Left ventricle myocardium inferior (tissue), 1 donor: ENCODE measurements at regions of chr14 and their contacts with region 1.

Region 1: DNA sequence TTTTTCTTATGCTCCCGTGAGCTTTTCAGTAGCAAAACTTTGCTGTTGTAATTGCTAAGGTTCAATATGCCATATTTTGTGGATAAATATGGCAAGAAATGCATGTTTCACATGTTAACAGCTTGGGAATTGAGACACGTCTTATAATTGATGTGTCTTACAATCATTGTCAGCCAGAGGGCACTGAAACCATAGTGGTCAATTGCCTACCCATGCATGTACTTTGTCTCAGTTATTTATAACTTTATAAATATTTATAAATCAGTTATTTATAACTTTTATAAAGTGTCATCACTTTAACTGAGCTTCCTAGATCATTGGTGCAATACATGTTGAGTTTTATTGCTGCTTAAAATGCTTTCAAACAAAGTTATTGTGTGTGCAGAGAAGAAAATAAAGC is 82.0 kb downstream of the CATSPERB start:
- DNase-seq: no peak
- H3K4me3 ChIP-seq: no peak overlapping the region
- H3K27ac ChIP-seq: no peak overlapping the region
- H3K4me1 ChIP-seq: no peaks in the 10 kb centered on the region
- H3K27me3 ChIP-seq: peaks cover 25% of the 10 kb centered on the region
- CTCF ChIP-seq: peak; percentile 69

Region 2: GRCh38 chr14:91554535-91555332 is 95.2 kb before region 1 on chr14:
- intact Hi-C with region 1: no loop called
- DNase-seq: no peak
- H3K4me3 ChIP-seq: no peak overlapping the region
- H3K27ac ChIP-seq: no peak overlapping the region
- H3K4me1 ChIP-seq: no peaks in the 10 kb centered on the region
- H3K27me3 ChIP-seq: peaks cover 32% of the 10 kb centered on the region
- CTCF ChIP-seq: no peak

Region 3: GRCh38 chr14:91911474-91912032 is 261.6 kb after region 1 on chr14:
- intact Hi-C with region 1: loop called (anchors 5 kb)
- DNase-seq: no peak
- H3K4me3 ChIP-seq: no peak overlapping the region
- H3K27ac ChIP-seq: peak overlapping the region; percentile 15
- H3K4me1 ChIP-seq: peaks cover 11% of the 10 kb centered on the region
- H3K27me3 ChIP-seq: peaks cover 32% of the 10 kb centered on the region
- CTCF ChIP-seq: peak; percentile 60